ENCODE measurements at regions of chr22 and their contacts with region 1.

Region 1: DNA sequence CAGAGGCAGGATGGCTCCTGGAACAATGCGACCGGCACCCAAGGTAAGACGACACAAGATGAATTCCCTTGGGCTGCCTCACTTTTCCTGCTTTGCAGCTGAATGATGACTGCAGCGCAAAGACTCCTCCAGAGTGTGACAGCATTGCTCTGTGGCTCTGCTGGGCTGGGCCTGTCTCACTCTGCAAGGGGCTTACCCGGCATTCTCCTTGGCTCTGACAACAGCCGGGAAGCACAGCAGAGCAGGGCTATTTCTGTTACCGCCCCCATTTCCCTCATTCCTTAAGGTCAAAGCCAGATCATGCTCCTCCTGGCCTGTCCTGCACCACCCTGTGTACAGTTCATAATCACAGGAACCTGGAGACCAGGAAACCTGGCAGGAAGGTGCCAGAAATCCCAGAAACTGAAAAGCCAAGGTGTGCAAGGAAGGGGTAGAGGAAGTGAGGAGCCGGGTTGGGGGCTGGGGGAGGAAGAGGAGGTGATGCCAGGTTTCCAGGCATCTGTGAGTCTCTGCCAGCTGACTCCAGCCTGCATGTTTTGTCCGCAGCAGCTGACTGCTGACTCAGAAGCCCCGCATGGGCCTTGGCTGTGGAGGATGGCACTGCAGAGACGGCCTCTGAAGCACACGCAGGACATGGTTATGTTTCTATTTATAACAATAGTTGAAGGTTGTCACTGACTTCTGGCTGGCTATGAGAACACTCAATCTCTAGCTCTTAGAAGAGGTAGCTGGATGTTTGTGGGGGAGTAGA is 113.6 kb downstream of the MICAL3 start:
- DNase-seq: peak; percentile 70
- H3K4me3 ChIP-seq: no peak overlapping the region
- H3K27ac ChIP-seq: peak overlapping the region; percentile 14
- H3K4me1 ChIP-seq: peaks cover 21% of the 10 kb centered on the region
- H3K27me3 ChIP-seq: no peaks in the 10 kb centered on the region
- CTCF ChIP-seq: peak; percentile 36 to 57

Region 2: DNA sequence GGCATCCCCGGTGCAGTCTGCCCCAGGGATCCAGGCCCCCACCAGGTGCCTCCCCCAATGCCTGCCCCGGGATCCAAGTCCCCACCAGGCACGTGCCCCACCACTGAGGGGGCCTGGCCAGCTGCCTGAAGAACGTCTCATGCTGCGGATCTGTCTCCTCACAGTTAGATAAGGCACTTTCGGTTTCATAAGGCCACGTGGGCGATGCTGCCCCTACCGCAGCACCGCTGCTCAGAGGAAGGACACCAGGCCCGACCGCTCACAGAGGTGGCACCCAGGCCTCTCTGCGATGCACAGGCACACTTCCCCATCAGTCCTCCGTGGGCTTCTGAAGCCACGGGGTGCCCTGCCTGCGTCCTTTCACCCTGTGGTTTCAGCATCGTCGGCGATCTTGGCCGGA is 68.3 kb before region 1 on chr22:
- CTCF ChIA-PET with region 1: no interaction called
- dilution Hi-C with region 1: loop called (anchors 5 kb)
- in situ Hi-C with region 1: loop called in 1 of 2 experiments (anchors 10 kb)
- intact Hi-C with region 1: no loop called
- DNase-seq: no peak
- H3K4me3 ChIP-seq: no peak overlapping the region
- H3K27ac ChIP-seq: no peak overlapping the region
- H3K4me1 ChIP-seq: peaks cover 16% of the 10 kb centered on the region
- H3K27me3 ChIP-seq: no peaks in the 10 kb centered on the region
- CTCF ChIP-seq: no peak

Region 3: DNA sequence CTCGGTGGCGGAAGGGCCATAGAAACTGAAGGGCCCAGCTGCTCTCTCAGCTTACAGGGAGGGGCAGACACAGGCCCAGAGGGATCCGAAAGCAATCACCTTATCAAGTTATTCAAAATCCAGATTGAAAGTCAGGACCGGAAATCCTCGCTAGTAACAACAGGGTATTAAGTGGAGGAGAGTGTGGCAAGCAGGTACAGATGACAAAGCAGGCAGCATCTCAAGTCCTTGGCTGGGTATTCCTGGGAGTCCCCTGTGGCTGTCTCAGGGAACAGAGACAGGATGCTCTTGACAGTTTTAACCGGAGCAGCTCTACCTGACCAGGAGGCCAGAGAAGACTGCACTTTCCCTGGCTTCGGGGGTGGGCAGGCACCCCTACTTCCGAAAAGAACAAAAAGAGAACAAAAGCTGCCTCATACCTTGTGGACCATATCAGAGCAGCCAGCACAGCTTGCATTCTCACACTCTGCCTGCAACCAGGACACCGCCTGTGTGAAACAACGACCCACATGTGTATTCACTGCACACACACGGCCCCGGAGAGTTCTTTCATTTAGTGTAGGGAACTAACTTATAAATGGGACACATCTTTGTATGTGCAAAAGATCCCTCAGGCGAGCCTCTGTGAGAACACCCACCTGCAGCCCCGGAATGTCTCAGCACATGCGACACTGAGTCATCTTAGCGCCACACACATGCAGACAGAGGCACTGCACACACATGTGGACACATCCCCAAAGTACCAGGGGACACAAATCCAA is 35.3 kb after region 1 on chr22:
- CTCF ChIA-PET with region 1: interaction called, 3 read pairs
- dilution Hi-C with region 1: loop called (anchors 5 kb)
- in situ Hi-C with region 1: no loop called
- intact Hi-C with region 1: no loop called
- DNase-seq: no peak
- H3K4me3 ChIP-seq: no peak overlapping the region
- H3K27ac ChIP-seq: no peak overlapping the region
- H3K4me1 ChIP-seq: peaks cover 30% of the 10 kb centered on the region
- H3K27me3 ChIP-seq: no peaks in the 10 kb centered on the region
- CTCF ChIP-seq: peak in 1 of 2 donors; percentile 20

Region 4: DNA sequence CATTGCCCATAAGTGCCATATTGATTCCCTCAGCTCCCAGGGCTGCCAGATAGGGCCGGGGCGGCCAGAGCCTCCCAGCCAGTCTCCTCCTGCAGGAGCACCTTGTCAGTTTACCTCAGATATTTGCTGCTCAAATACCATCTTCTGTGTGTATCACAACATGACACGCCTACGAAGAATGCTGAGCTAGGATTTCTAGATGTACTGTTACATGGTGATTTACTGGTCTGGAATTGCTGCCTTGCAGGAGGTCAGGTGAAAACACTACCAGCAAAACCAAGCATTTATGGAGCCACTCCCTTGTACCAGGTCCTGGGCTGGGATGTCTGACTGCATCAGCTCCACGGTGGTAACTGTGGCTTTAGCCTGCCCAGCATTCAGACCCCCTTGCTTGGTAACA is 101.8 kb after region 1 on chr22:
- CTCF ChIA-PET with region 1: no interaction called
- dilution Hi-C with region 1: loop called (anchors 5 kb)
- in situ Hi-C with region 1: no loop called
- intact Hi-C with region 1: no loop called
- DNase-seq: peak; percentile 82
- H3K4me3 ChIP-seq: no peak overlapping the region
- H3K27ac ChIP-seq: no peak overlapping the region
- H3K4me1 ChIP-seq: peaks cover 20% of the 10 kb centered on the region
- H3K27me3 ChIP-seq: no peaks in the 10 kb centered on the region
- CTCF ChIP-seq: no peak

Measured in mammary epithelial cell (primary cell).